K562 (cell line): ENCODE measurements at regions of chr12 and their contacts with region 1.

Region 1: GRCh38 chr12:123232807-123233543 is at the starts of genes MPHOSPH9 and MTRFR:
- DNase-seq: peak; percentile 98 to 99 (median 99)
- ATAC-seq: peak; percentile 95
- H3K4me3 ChIP-seq: peak within 1 kb of the TSS; percentile 72
- H3K27ac ChIP-seq: peak within 1 kb of the TSS; percentile 94
- H3K4me1 ChIP-seq: peaks cover 19 to 21% of the 10 kb centered on the region in 2 experiments; a peak in 4 of 5 replicates
- H3K27me3 ChIP-seq: no peaks in the 10 kb centered on the region
- CTCF ChIP-seq: no peak
- EP300 ChIP-seq: no peak
- POLR2A ChIP-seq: peak; percentile 100
- RAD21 ChIP-seq: 0 out of 4 replicates have a peak, but pooled peaks of 1 of the 2 experiments have one; percentile 3
- polyA plus RNA-seq, gene MPHOSPH9: 14.2 to 22.5 TPM
- polyA plus RNA-seq, gene MTRFR: 52.6 to 55.6 TPM

Region 2: DNA sequence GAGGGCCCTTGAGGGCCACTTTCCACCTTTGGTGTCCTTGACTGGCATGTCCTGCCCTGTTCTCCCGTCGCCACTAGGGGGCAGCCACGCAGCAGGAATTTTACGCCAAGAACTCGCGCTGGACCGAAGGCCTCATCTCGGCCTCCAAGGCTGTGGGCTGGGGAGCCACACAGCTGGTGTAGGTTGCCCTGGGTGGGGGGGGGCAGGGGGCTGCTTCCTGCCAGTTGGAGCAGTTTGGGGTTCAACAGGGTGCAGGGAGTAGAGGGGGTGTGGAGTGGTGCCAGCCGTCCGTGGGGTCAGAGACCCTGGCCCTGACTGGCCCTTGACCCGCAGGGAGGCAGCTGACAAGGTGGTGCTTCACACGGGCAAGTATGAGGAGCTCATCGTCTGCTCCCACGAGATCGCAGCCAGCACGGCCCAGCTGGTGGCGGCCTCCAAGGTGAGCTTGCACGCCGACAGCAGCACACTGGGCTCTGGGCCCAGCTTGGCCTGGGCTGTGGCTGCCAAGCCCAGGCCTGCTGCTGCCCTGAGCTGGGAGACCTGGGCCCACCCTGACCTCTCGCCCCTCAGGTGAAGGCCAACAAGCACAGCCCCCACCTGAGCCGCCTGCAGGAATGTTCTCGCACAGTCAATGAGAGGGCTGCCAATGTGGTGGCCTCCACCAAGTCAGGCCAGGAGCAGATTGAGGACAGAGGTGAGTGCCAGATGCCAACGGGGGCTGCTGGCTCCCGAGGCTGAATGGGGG is 372.5 kb before region 1 on chr12:
- CTCF ChIA-PET with region 1: interaction called, 7 read pairs
- POLR2A ChIA-PET with region 1: interaction called, 3 read pairs
- in situ Hi-C with region 1: no loop called
- intact Hi-C with region 1: loop called (anchors 5 kb)
- DNase-seq: peak; percentile 73 to 87 (median 80)
- ATAC-seq: peak; percentile 91
- H3K4me3 ChIP-seq: no peak overlapping the region
- H3K27ac ChIP-seq: no peak overlapping the region
- H3K4me1 ChIP-seq: peaks cover 0 to 54% of the 10 kb centered on the region in 2 experiments; a peak in 2 of 5 replicates
- H3K27me3 ChIP-seq: no peaks in the 10 kb centered on the region
- CTCF ChIP-seq: peak; percentile 86 to 90 (median 90)
- EP300 ChIP-seq: no peak
- POLR2A ChIP-seq: no peak
- RAD21 ChIP-seq: peak; percentile 85 to 95

Region 3: GRCh38 chr12:122888232-122888867 is 344.6 kb before region 1 on chr12:
- CTCF ChIA-PET with region 1: no interaction called
- POLR2A ChIA-PET with region 1: interaction called, 5 read pairs
- in situ Hi-C with region 1: no loop called
- intact Hi-C with region 1: loop called (anchors 10 kb)
- DNase-seq: peak in 2 of 4 experiments; percentile 45 to 60
- ATAC-seq: peak; percentile 68
- H3K4me3 ChIP-seq: peak overlapping the region; percentile 14; the same call in 1 of the 2 replicates
- H3K27ac ChIP-seq: peak overlapping the region; percentile 79
- H3K4me1 ChIP-seq: peaks cover 41 to 76% of the 10 kb centered on the region in 2 experiments
- H3K27me3 ChIP-seq: no peaks in the 10 kb centered on the region
- CTCF ChIP-seq: no peak
- EP300 ChIP-seq: no peak
- POLR2A ChIP-seq: no peak
- RAD21 ChIP-seq: no peak

Region 4: GRCh38 chr12:122974274-122974891 is 258.6 kb before region 1 on chr12:
- CTCF ChIA-PET with region 1: no interaction called
- POLR2A ChIA-PET with region 1: interaction called, 18 read pairs
- in situ Hi-C with region 1: no loop called
- intact Hi-C with region 1: no loop called
- DNase-seq: peak; percentile 86 to 99 (median 89)
- ATAC-seq: peak; percentile 82
- H3K4me3 ChIP-seq: peak overlapping the region; percentile 66
- H3K27ac ChIP-seq: peak overlapping the region; percentile 97
- H3K4me1 ChIP-seq: peaks cover 11 to 38% of the 10 kb centered on the region in 2 experiments
- H3K27me3 ChIP-seq: no peaks in the 10 kb centered on the region
- CTCF ChIP-seq: no peak
- EP300 ChIP-seq: peak; percentile 92
- POLR2A ChIP-seq: peak; percentile 69
- RAD21 ChIP-seq: no peak; a peak in 1 of 4 replicates

Region 5: DNA sequence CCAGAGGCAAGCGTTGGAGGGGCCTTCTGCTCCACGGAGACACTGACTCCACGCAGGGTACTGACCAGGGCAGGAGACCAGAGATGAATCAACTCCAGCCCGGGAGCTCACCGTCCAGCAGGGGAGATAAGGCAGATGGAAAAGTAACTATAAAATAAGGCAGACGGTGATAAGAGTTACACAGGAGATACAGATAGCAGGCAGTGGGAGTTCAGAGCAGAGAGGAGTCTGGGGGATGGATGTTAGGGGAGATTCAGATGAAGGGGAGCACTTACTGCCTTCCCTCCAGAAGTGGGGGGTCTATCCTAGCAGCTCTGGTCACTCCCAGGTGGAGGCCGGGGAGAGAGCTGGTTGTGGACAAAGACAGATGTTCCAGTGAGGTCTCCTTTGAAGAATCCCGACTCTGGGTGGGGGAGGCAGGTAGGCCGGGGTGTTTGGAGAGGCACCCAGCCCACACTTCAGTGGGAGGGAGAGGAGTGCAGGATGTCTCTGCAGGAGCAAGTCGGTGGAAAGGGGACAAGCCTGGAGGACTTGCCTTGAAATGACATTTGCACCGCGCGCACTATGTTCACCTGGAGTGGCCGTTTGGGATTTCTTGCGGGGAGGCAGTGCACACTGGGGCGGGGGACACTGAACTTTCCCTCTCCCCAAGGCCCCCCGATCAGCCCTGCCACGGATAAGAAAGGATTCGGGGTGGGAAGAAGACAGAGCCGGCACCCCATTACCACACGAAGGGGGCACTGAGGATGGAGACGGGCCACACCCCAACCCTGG is 83.3 kb before region 1 on chr12:
- CTCF ChIA-PET with region 1: no interaction called
- POLR2A ChIA-PET with region 1: interaction called, 4 read pairs
- in situ Hi-C with region 1: no loop called
- intact Hi-C with region 1: loop called (anchors 5 kb)
- DNase-seq: peak; percentile 72 to 81 (median 80)
- ATAC-seq: peak; percentile 51
- H3K4me3 ChIP-seq: peak overlapping the region; percentile 56
- H3K27ac ChIP-seq: peak overlapping the region; percentile 48; the same call in 2 of the 3 replicates
- H3K4me1 ChIP-seq: peaks cover 26 to 30% of the 10 kb centered on the region in 2 experiments; a peak in 4 of 5 replicates
- H3K27me3 ChIP-seq: no peaks in the 10 kb centered on the region
- CTCF ChIP-seq: no peak
- EP300 ChIP-seq: peak; percentile 68
- POLR2A ChIP-seq: no peak
- RAD21 ChIP-seq: no peak

Region 6: GRCh38 chr12:123200414-123200813 is 32.6 kb before region 1 on chr12:
- CTCF ChIA-PET with region 1: no interaction called
- POLR2A ChIA-PET with region 1: interaction called, 10 read pairs
- in situ Hi-C with region 1: no loop called
- intact Hi-C with region 1: no loop called
- DNase-seq: no peak
- ATAC-seq: no peak
- H3K4me3 ChIP-seq: no peak overlapping the region
- H3K27ac ChIP-seq: no peak overlapping the region
- H3K4me1 ChIP-seq: no peaks in the 10 kb centered on the region
- H3K27me3 ChIP-seq: no peaks in the 10 kb centered on the region
- CTCF ChIP-seq: no peak
- EP300 ChIP-seq: no peak
- POLR2A ChIP-seq: no peak
- RAD21 ChIP-seq: no peak

Region 7: GRCh38 chr12:123369229-123369628 is 136.3 kb after region 1 on chr12:
- CTCF ChIA-PET with region 1: no interaction called
- POLR2A ChIA-PET with region 1: no interaction called
- in situ Hi-C with region 1: no loop called
- intact Hi-C with region 1: no loop called
- DNase-seq: peak in 1 of 4 experiments; percentile 49
- ATAC-seq: no peak
- H3K4me3 ChIP-seq: no peak overlapping the region
- H3K27ac ChIP-seq: peak overlapping the region; percentile 46; the same call in 1 of the 3 replicates
- H3K4me1 ChIP-seq: peaks cover 28 to 43% of the 10 kb centered on the region in 2 experiments
- H3K27me3 ChIP-seq: no peaks in the 10 kb centered on the region
- CTCF ChIP-seq: no peak
- EP300 ChIP-seq: no peak
- POLR2A ChIP-seq: no peak
- RAD21 ChIP-seq: no peak